ENCODE measurements at regions of chr15 and their contacts with region 1.

Region 1: DNA sequence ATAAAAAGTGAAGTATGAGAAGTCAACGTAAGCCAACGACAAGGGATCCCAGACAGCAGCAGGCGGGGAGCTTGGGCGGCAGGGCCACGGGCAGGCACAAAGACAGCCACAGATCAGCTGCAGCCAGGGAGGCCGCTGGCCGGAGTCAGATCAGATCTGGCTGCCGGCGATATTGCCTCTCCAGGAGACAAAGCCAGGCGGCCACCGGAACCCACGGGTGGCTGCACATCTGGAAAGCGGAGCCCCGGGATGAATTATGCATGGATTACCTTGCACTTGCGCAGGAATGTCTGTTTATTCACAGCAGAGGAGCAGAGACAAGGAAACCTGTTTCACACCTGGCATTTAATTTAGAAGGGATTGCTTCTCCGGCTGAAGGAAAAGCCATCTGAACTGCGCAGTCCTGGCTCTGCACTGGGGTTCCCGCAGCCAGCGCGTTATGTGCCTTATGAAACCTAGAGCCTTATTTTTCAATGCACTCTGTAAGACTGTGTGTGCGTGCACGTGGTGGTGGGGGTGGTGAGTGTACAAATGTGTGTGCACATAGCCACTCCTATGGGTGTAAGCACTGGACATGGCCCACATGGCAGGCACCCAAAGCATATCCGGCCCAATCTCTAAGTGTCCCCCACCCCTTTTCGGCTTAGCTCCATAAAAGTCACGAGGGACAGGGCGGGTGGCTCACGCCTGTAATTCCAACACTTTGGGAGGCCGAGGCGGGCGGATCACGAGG is 427.8 kb upstream of the MCTP2 start:
- DNase-seq: no peak

Region 2: DNA sequence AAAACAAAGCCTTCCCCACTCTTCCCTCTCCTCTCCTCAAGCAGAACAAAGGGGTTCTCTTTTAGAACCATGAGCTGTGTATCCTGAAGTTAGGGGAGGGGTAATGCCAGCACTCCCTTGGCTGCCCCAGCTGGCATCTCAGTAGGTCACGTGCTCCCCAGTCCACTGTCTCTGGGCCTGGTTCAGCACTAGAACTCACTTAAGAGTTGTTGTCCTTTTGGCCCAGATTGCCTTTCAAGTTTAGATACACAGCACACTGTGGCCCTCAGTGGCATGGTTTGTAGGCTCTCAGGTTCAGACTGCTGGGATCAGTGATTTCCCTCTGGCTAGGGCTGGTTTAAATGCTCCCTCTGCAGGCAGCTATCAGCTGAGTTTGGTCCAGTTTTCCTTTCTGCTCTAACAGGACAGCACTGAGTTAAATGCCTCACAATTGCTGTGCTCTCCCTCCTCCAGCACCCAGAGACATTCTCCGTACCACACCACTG is 1598.3 kb before region 1 on chr15:
- intact Hi-C with region 1: loop called in 1 of 2 experiments (anchors 5 kb)
- DNase-seq: no peak

Region 3: DNA sequence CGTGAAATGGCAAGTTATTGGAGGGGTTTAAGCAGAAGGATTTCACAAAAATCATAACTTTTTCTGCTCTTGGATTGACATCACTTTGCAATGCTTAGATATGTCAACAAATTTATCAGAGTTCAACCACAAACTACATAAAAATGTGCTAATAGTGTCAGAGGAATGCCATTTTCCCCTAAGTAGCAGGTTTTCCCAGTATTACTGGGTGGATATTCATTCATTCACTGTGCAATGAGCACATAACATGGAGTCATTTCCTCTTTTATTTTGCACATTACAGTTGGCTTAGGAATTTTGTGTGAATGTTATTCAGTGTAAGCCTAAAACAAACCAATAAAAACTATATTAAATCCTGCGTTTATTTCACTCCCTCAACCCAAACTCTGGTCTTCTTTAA is 109.6 kb before region 1 on chr15:
- intact Hi-C with region 1: no loop called
- DNase-seq: no peak

Region 4: GRCh38 chr15:93771196-93772030 is 32.2 kb before region 1 on chr15:
- intact Hi-C with region 1: loop called in 1 of 2 experiments (anchors 1 kb)
- DNase-seq: no peak

Measured in posterior vena cava (tissue), 2 donors.